Activated CD4-positive, alpha-beta T cell treated with anti-CD3 and anti-CD28 coated beads, Interleukin-2, amount 10 ng/mL, durations not matched to agents 24 days and 14 days (primary cell): ENCODE measurements at regions of chr13 and their contacts with region 1.

Region 1: DNA sequence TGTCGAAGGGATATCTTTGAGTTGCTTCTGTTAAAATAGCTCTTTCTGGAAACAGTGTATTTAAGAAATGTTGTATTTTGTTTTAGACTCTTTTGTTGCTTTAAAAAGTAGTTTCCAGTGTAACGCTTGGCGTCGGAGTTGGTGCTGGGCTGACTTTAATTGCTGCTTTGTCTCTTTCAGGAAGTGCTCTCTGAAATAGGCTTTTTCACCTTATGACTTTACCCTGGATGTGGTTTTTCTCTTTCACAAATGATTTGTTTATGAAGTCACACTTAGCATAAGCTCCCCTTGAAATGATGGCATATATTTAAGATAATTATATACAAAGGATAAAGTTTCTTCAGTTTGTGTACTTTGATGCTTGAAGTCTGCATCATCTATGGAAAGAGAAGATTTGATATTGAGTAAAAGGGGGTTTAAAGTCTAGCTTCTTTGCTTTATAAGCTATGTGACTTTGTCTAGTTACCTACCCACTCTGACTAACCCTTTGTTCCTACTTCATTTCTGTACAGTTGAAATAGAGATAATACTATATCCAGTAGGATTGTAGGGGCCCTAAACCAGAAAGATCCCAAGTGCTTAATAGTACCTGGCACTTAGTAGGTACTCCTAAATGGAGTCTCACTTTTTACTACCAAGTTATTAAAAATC is at the start of gene GPR18:
- DNase-seq: peak; percentile 80
- H3K4me3 Mint-ChIP-seq: peak within 1 kb of the TSS; percentile 92
- H3K27ac Mint-ChIP-seq: peak within 1 kb of the TSS; percentile 96
- H3K4me1 Mint-ChIP-seq: peaks cover 51% of the 10 kb centered on the region
- H3K27me3 Mint-ChIP-seq: no peaks in the 10 kb centered on the region
- total RNA-seq, gene GPR18: 5.9 and 6.3 TPM in 2 replicates

Region 2: GRCh38 chr13:99041788-99042187 is 216.5 kb before region 1 on chr13:
- intact Hi-C with region 1: loop called (anchors 5 kb)
- DNase-seq: no peak
- H3K4me3 Mint-ChIP-seq: peak overlapping the region; percentile 18
- H3K27ac Mint-ChIP-seq: peak overlapping the region; percentile 59
- H3K4me1 Mint-ChIP-seq: peaks cover 62% of the 10 kb centered on the region
- H3K27me3 Mint-ChIP-seq: no peaks in the 10 kb centered on the region

Region 3: GRCh38 chr13:99200432-99201167 is 57.7 kb before region 1 on chr13 and contains the start of gene UBAC2:
- intact Hi-C with region 1: loop called (anchors 1 kb)
- DNase-seq: peak; percentile 99
- H3K4me3 Mint-ChIP-seq: peak within 1 kb of the TSS; percentile 97
- H3K27ac Mint-ChIP-seq: peak within 1 kb of the TSS; percentile 97
- H3K4me1 Mint-ChIP-seq: peaks cover 46% of the 10 kb centered on the region
- H3K27me3 Mint-ChIP-seq: no peaks in the 10 kb centered on the region
- total RNA-seq, gene UBAC2: 52.6 and 52.8 TPM in 2 replicates

Region 4: GRCh38 chr13:99228737-99229691 is 29.3 kb before region 1 on chr13:
- intact Hi-C with region 1: loop called (anchors 2 kb)
- DNase-seq: peak; percentile 65
- H3K4me3 Mint-ChIP-seq: peak overlapping the region; percentile 79
- H3K27ac Mint-ChIP-seq: peak overlapping the region; percentile 86
- H3K4me1 Mint-ChIP-seq: peaks cover 50% of the 10 kb centered on the region
- H3K27me3 Mint-ChIP-seq: no peaks in the 10 kb centered on the region

Region 5: GRCh38 chr13:99237981-99238662 is 20.2 kb before region 1 on chr13:
- intact Hi-C with region 1: loop called (anchors 2 kb)
- DNase-seq: peak; percentile 79
- H3K4me3 Mint-ChIP-seq: peak overlapping the region; percentile 82
- H3K27ac Mint-ChIP-seq: peak overlapping the region; percentile 89
- H3K4me1 Mint-ChIP-seq: peaks cover 39% of the 10 kb centered on the region
- H3K27me3 Mint-ChIP-seq: no peaks in the 10 kb centered on the region

Region 6: GRCh38 chr13:99464441-99464949 is 206.2 kb after region 1 on chr13:
- intact Hi-C with region 1: no loop called
- DNase-seq: peak; percentile 68
- H3K4me3 Mint-ChIP-seq: peak overlapping the region; percentile 58
- H3K27ac Mint-ChIP-seq: peak overlapping the region; percentile 90
- H3K4me1 Mint-ChIP-seq: peaks cover 25% of the 10 kb centered on the region
- H3K27me3 Mint-ChIP-seq: peaks cover 6% of the 10 kb centered on the region